ENCODE measurements at regions of chr5 and their contacts with region 1.

Region 1: GRCh38 chr5:82334856-82335255 is 56.7 kb upstream of the RPS23 start:
- DNase-seq: no peak
- H3K4me3 ChIP-seq: no peak overlapping the region
- H3K27ac ChIP-seq: peak overlapping the region; percentile 95 to 100; a peak in 3 of 4 replicates
- H3K4me1 ChIP-seq: peaks cover 20 to 37% of the 10 kb centered on the region in 2 experiments
- H3K27me3 ChIP-seq: no peaks in the 10 kb centered on the region
- CTCF ChIP-seq: no peak
- EP300 ChIP-seq: peak in 1 of 2 experiments; percentile 93; a peak in 2 of 4 replicates
- RAD21 ChIP-seq: no peak

Region 2: DNA sequence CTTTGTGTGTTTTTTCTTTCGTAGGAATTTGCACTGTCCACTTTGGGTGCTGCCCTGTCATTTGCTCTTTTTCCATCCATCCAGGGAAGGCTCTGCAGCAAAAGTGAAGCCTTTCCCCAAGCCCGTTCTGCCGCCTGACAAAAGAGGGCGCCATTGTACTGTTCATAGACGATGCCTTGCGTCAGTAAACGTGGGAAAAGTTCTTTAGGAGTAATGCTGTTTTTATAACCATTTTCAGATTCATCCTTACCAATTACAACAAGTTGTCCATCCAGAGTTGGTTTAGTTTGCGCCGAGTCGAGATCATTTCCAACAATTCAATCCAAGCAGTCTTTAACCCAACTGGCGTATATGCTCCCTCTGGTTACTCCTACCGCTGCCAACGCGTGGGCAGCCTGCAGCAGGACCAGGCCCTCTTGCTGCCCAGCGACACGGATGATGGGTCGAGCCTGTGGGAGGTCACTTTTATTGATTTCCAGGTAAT is 22.4 kb before region 1 on chr5:
- CTCF ChIA-PET with region 1: interaction called, 39 read pairs
- POLR2A ChIA-PET with region 1: no interaction called
- DNase-seq: peak; percentile 60
- H3K4me3 ChIP-seq: no peak overlapping the region; a peak in 1 of 4 replicates
- H3K27ac ChIP-seq: peak overlapping the region; percentile 55 to 66; a peak in 3 of 4 replicates
- H3K4me1 ChIP-seq: peaks cover 8% of the 10 kb centered on the region in 2 experiments; a peak in 3 of 4 replicates
- H3K27me3 ChIP-seq: no peaks in the 10 kb centered on the region
- CTCF ChIP-seq: peak; percentile 98
- EP300 ChIP-seq: no peak
- RAD21 ChIP-seq: peak; percentile 96

Measured in SK-N-SH (cell line).